ENCODE measurements at regions of chr7 and their contacts with region 1.

Region 1: DNA sequence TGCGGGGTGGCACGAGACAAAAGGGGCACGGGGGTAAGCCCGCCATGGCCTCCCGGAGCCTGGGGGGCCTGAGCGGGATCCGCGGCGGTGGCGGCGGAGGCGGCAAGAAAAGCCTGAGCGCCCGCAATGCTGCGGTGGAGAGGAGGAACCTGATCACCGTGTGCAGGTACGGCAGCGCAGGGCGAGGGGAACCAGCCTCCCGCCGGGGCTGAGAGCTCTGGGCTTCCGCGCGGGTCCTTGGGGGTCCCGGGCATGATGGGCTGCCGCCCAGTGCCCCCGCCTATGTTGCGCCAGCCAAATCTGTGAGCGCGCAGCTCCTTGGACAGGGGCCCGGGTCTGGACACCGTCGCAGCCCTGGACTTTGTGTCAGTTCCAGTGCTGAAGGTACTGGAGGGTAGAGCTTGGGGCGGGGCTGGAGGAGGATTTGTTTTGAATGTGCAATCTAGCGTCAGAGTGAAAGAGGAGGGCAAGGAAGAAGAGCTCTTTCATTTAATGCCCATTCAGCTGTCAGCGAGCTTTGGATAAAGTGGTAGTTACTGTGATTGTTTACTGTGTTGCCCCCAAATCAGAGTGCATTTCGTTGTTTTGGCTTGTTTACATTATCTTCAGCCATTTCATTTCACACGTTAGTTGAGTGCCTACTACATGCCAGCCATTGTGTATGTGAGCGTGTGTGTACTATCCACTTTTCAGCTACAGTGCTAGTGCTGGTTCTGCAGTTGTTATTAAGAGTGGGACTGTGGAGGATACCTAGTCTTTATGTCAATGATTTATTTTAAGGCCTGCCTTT is 777 bp downstream of the RUNDC3B start:
- DNase-seq: peak; percentile 66
- H3K4me3 Mint-ChIP-seq: peak overlapping the region; percentile 88
- H3K27ac Mint-ChIP-seq: no peak overlapping the region
- H3K4me1 Mint-ChIP-seq: peaks cover 10% of the 10 kb centered on the region
- H3K27me3 Mint-ChIP-seq: peaks cover 26% of the 10 kb centered on the region

Region 2: DNA sequence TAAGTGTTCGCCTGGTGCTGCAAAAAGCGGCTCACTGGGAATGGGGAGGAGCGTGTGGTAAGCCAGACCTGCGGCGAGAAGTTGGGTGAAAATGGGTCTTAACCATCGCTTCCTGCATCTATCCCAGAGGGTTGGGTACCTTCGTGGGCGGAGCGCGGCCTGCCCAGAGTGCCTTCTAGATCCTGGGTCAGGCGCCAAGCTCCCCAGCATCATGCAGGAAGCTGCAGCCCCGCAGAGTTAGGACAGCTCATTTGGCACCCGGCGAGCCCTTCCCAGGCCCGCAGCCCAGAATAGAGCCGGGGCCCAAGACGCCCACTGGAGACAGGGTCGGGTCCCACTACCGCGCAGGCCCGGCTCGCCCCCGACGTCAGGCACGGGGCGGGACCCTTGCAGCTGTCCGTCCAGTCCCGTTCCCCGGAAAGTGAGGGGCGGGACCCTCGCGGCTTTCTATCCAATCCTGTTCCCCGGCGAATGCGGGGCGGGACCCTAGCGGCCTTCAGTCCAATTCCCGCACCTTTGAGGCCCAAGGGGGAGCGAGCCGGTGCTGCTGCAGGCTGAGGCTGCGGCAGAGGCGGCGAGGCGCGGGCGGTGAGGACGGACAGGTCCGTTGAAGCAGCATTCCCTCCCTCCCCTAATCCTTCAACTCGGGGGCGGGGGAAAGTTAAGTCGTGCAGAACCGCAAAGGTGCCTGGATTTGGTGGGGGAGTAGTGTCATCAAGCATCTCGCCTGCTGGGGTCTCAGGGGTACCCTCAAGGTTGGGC is 283.6 kb before region 1 on chr7 and contains the start of gene CROT:
- intact Hi-C with region 1: loop called (anchors 2 kb)
- DNase-seq: peak; percentile 99
- H3K4me3 Mint-ChIP-seq: peak within 1 kb of the TSS; percentile 97
- H3K27ac Mint-ChIP-seq: peak within 1 kb of the TSS; percentile 95
- H3K4me1 Mint-ChIP-seq: peaks cover 46% of the 10 kb centered on the region
- H3K27me3 Mint-ChIP-seq: no peaks in the 10 kb centered on the region
- total RNA-seq, gene CROT: 6.2 and 7.1 TPM in 2 replicates

Region 3: DNA sequence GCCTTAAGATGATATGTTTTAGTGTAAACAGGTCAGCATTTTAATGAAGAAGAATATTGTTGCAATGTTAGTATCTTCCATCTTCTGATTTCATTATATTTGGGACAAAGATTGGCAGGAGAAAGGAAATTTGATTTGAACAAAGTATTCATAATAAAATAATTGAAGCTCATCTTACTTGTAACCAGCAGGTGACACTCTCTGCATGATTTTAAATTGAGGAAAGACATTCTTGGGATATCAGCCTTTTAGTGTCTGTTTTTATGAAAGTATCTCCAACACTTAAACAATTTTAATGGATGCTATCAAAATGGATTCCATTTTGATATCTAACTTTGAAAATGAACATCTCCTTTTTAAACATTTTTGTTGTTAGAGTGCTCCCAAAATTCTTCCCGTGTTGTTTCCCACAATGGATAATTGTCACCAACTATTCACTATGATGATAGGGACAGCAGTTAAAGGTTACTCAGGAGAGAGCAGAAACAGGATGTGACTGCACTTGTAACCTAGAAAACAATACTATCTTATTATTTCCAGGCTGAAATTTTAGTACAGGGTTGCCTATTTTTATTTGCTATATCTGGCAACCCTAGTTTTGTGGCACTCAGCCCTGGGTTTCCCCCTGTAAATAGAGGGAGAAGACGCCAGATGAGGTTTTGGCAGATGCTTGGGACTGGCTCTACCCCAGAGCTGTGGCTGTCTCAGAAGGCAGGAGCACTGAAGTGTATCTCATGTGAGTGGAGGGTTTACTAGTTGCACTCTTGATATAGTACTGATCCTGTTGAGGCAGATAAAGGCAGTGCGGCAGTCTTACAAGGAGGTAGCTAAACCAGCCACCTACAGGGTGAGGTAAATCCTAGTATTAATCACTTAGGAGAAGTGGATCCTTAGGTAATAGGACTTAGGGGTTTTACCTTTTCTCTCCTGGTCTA is 122.5 kb before region 1 on chr7:
- intact Hi-C with region 1: loop called (anchors 5 kb)
- DNase-seq: no peak
- H3K4me3 Mint-ChIP-seq: no peak overlapping the region
- H3K27ac Mint-ChIP-seq: no peak overlapping the region
- H3K4me1 Mint-ChIP-seq: peaks cover 12% of the 10 kb centered on the region
- H3K27me3 Mint-ChIP-seq: no peaks in the 10 kb centered on the region

Region 4: DNA sequence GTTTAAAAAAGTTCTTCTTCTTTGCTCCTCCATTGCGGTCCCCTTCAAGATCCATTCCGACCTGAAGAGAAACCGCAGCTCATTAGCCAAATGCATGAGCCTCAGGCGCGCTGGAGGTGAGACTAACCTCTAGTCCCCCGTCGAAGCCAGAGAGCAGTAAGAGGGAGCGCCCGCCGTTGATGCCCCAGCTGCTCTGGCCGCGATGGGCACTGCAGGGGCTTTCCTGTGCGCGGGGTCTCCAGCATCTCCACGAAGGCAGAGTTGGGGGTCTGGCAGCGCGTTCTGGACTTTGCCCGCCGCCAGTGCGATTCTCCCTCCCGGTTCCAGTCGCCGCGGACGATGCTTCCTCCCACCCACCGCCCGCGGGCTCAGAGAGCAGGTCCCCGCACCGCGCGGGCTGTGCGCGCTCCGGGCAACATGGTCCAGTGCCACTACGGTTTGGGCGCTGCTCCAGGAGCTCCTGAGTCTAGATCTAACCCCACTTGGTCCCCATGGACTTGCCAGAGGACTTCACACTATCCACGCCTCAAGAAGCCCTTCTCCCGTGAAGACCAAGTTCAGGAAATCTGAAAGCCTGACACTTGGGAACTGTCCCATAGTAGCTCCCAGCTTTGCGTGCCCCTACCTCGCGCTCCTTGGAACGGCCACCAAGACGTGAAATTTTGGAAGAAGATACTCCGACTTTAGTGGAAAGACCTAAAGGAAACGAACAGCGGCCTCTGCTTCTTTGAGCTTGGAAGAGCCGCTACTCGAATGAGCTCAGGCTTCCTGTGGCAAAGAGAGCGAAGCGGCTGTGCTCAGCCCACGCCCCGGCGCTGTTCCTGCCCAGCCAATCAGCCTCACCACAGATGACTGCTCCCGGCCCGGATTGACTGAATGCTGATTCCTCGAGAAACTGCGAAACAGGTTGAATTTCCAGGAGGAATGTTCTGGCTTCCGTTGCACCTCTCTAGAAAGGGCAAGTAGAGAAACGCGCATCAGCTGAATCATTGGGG is 28.5 kb before region 1 on chr7 and contains the start of gene ABCB1:
- intact Hi-C with region 1: loop called (anchors 2 kb)
- DNase-seq: peak; percentile 83
- H3K4me3 Mint-ChIP-seq: peak within 1 kb of the TSS; percentile 89
- H3K27ac Mint-ChIP-seq: peak within 1 kb of the TSS; percentile 41
- H3K4me1 Mint-ChIP-seq: peaks cover 23% of the 10 kb centered on the region
- H3K27me3 Mint-ChIP-seq: peaks cover 39% of the 10 kb centered on the region
- total RNA-seq, gene ABCB1: 1.4 and 2.2 TPM in 2 replicates

Region 5: DNA sequence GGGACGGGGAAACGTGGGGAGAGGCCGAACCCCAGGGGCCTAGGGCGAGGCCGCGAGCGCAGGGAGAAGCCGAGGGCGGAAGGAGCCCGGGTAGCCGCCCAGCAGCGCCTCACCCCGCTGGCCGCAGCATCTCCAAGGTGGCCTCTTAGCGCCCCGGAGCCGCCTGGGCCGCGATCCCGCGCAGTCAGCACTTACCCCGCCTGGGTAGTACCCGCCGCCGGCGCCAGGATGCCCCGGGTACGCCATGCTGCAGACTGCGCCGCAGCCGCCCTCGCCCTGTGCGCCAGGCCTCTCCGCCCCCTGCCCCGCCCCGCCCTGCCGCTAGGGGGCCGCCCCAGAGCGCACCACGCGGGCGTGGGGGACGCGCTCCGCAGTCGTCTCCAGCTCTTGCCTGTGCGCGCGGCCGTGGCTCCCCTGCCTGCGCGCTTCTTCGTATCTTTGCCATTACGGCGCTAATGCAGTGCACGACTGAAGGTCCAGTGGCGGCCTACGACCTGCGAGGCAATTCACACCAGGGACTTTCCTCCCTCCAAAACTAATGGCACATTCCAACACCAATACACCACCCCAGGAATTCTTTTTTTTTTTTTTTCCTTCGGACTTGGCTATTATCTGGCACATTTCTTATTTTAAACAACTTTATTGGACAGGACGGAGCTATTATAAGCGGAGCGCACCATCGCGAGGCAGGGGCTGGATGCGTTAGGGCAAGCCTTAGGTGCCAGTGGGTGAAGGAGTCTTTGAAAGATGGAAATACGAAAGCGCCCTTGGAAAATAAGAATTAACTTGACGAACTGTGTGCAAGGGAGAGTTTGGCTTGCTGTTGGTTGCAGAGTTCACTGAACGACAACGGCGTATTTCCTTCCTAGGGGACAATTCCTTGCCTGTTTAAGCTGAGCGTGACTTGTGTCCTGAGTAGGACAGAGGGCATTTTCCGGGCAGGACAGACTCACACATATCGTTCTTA is 591.1 kb after region 1 on chr7 and contains the start of gene SRI:
- intact Hi-C with region 1: loop called (anchors 1 kb)
- DNase-seq: peak; percentile 97
- H3K4me3 Mint-ChIP-seq: peak within 1 kb of the TSS; percentile 90
- H3K27ac Mint-ChIP-seq: peak within 1 kb of the TSS; percentile 96
- H3K4me1 Mint-ChIP-seq: peaks cover 28% of the 10 kb centered on the region
- H3K27me3 Mint-ChIP-seq: peaks cover 3% of the 10 kb centered on the region
- total RNA-seq, gene SRI: 188 and 207 TPM in 2 replicates

Measured in activated CD4-positive, alpha-beta T cell treated with anti-CD3 and anti-CD28 coated beads, Interleukin-2, amount 10 ng/mL, durations not matched to agents 24 days and 14 days (primary cell).